Activated CD4-positive, alpha-beta T cell treated with anti-CD3 and anti-CD28 coated beads, Interleukin-2, amount 10 ng/mL, durations not matched to agents 24 days and 14 days (primary cell): ENCODE measurements at regions of chr15 and their contacts with region 1.

Region 1: DNA sequence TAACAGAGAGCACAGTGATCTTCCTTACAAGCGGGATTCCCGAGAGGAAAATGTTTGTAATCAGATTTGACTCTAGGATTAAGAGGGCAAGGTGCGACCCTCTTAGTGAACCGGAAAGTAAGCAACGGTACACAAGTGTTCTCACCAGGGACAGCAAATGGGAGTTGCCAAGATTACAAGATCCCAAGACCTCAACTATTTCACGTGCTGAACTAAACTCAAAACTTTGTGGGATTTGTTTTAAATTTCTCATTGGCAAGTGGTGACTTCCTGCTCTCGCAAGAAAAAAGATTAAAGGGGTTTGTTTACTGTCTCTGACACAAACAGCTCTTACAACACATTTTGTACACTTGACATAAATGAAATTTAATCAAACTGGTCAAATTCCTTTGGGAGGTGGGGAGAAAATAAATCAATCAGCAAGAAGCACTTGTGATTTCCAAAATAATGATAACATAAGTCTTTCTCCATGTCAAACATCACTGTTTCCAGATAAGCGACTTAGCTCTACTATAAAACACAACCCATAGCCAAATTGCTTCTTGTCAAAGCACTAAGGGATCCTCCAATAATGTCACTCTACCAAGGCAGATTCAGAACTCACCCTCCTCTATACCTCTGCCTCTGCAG is 2.3 kb upstream of the PGPEP1L start:
- DNase-seq: no peak
- H3K4me3 Mint-ChIP-seq: no peak overlapping the region
- H3K27ac Mint-ChIP-seq: no peak overlapping the region
- H3K4me1 Mint-ChIP-seq: peaks cover 2% of the 10 kb centered on the region
- H3K27me3 Mint-ChIP-seq: peaks cover 12% of the 10 kb centered on the region

Region 2: DNA sequence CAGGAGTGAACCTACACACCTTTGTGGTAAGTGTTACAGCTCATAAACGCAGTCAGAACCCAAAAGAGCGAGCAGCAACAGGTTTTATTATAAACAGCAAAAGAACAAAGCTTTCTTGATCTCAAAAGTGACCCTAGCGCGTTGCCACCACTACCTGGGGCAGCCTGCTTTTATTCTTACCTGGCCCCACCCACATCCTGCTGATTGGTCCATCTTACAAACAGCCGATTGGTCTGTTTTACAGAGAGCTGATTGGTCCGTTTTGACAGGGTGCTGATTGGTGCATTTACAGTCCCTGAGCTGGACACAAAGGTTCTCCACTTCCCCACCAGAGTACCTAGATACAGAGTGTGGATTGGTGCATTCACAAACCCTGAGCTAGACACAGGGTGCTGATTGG is 906.3 kb before region 1 on chr15:
- intact Hi-C with region 1: loop called (anchors 10 kb)
- DNase-seq: no peak
- H3K4me3 Mint-ChIP-seq: no peak overlapping the region
- H3K27ac Mint-ChIP-seq: no peak overlapping the region
- H3K4me1 Mint-ChIP-seq: no peaks in the 10 kb centered on the region
- H3K27me3 Mint-ChIP-seq: no peaks in the 10 kb centered on the region